Dorsolateral prefrontal cortex (tissue), 120 donors: ENCODE measurements at regions of chr9 and their contacts with region 1.

Region 1: GRCh38 chr9:71911253-71912074 is at the start of gene C9orf85:
- DNase-seq: peak; percentile 99 to 100 (median 100)
- H3K4me3 ChIP-seq: peak within 1 kb of the TSS; percentile 69 to 100 (median 91)
- H3K27ac ChIP-seq: peak within 1 kb of the TSS; percentile 79 to 99 (median 96)
- H3K27me3 ChIP-seq: no peaks in the 10 kb centered on the region
- CTCF ChIP-seq: peak in 15 of 56 donors; percentile 3 to 43 (median 18)
- total RNA-seq, gene C9orf85: 8.0 to 26.8 (median 14.8) TPM

Region 2: DNA sequence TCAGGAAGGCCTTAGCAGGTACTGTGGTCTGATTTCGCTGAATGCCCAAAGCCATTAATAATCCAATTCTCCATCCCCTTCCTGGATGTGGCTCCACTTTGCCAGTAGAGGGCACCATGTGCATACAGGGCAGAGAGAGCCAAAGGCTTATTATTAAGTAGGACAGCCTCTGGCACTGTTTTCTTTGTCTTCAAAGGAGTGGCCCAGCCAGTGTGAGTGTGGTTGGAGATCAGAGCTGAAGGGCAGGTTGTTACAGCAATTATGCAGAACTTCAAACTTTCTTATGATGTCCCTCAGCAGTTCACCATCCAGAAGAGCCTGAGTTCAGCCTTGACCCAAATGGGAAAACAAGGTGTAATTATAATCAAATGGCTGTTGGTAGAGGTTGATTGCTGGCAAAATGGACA is 104.6 kb before region 1 on chr9:
- intact Hi-C with region 1: loop called in 1 of 2 experiments (anchors 2 kb)
- DNase-seq: peak; percentile 32 to 75 (median 58)
- H3K4me3 ChIP-seq: peak overlapping the region in 1 of 59 donors; percentile 3
- H3K27ac ChIP-seq: peak overlapping the region in 1 of 59 donors; percentile 29
- H3K27me3 ChIP-seq: no peaks in the 10 kb centered on the region
- CTCF ChIP-seq: peak; percentile 56 to 99 (median 84)

Region 3: GRCh38 chr9:71830929-71831328 is 80.5 kb before region 1 on chr9:
- intact Hi-C with region 1: loop called in 1 of 2 experiments (anchors 2 kb)
- DNase-seq: no peak
- H3K4me3 ChIP-seq: no peak overlapping the region
- H3K27ac ChIP-seq: peak overlapping the region in 57 of 59 donors; percentile 52 to 97 (median 86)
- H3K27me3 ChIP-seq: no peaks in the 10 kb centered on the region
- CTCF ChIP-seq: no peak

Region 4: DNA sequence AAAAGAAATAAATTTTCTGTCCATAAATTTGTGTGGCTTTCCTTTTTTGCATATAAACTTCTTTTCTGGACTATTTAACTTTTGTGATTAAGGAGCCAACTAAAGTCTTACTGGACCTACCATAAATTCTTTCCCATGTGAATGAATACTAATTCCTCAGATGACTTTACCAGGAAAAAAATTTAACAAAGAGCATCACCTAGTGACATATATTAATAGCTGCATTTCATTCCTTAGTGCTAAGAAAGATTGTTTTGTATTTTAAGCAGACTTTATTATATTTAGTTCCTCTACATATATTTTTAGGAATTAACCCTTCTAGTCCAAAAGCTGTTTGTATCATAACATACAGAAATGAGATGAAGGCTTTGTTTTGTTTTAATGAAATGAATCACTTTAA is 64.4 kb after region 1 on chr9:
- intact Hi-C with region 1: loop called in 1 of 2 experiments (anchors 5 kb)
- DNase-seq: no peak
- H3K4me3 ChIP-seq: no peak overlapping the region
- H3K27ac ChIP-seq: peak overlapping the region in 2 of 59 donors; percentile 11 to 41
- H3K27me3 ChIP-seq: no peaks in the 10 kb centered on the region
- CTCF ChIP-seq: peak in 52 of 56 donors; percentile 22 to 75 (median 46)